Left ventricle myocardium superior (tissue), 1 donor: ENCODE measurements at regions of chr1 and their contacts with region 1.

Region 1: GRCh38 chr1:61453111-61453961 is 271.6 kb downstream of the TM2D1 start:
- DNase-seq: peak; percentile 88
- ATAC-seq: peak; percentile 78

Region 2: GRCh38 chr1:61337981-61338848 is 115.1 kb before region 1 on chr1:
- intact Hi-C with region 1: loop called (anchors 5 kb)
- DNase-seq: peak; percentile 71
- ATAC-seq: peak; percentile 86

Region 3: GRCh38 chr1:61741711-61742619 is 288.6 kb after region 1 on chr1 and contains the start of gene PATJ:
- intact Hi-C with region 1: no loop called
- DNase-seq: peak; percentile 74
- ATAC-seq: peak; percentile 87
- total RNA-seq, gene PATJ: 125 TPM

Region 4: GRCh38 chr1:61910035-61910434 is 456.7 kb after region 1 on chr1:
- intact Hi-C with region 1: no loop called
- DNase-seq: no peak
- ATAC-seq: no peak